Caco-2 (cell line): ENCODE measurements at regions of chr1 and their contacts with region 1.

Region 1: GRCh38 chr1:86499987-86500593 is 31.4 kb downstream of the CLCA1 start:
- DNase-seq: no peak
- H3K4me3 ChIP-seq: no peak overlapping the region
- H3K4me3 Mint-ChIP-seq: no peak overlapping the region
- H3K27ac Mint-ChIP-seq: no peak overlapping the region
- H3K4me1 ChIP-seq: peaks cover 10% of the 10 kb centered on the region; the same call in 1 of the 2 replicates
- H3K4me1 Mint-ChIP-seq: no peaks in the 10 kb centered on the region
- H3K27me3 ChIP-seq: no peaks in the 10 kb centered on the region
- H3K27me3 Mint-ChIP-seq: no peaks in the 10 kb centered on the region
- CTCF ChIP-seq: peak; percentile 74

Region 2: DNA sequence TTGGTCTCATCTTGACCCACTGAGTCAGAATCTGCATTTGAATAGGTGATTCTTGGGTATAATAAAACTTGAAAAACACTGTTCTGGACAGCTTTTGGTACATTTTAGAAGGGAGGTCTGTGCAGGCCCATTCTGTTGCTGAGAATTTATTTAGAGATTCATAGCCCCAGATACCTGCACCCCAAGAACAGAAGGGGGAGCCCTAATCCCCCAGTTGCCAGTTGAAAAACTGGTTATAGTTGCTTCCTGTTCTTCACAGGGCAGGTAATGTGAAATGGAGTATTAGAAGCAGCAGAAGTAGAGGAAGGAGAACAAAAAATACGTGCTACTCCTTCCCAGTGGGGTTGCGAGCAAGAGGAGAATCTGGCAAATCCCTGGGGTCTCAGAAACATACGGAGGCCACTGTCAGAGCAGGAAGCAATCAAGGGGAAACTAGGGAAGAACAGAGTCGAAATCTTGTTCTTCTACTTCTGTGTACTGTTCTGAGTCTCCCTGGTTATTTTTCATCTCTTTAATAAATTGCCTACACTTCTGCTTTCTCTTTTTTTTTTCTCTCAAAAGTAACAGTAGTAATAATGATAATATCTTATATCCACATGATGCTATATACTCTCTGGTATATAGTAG is 80.7 kb before region 1 on chr1:
- CTCF ChIA-PET with region 1: no interaction called
- POLR2A ChIA-PET with region 1: no interaction called
- intact Hi-C with region 1: loop called (anchors 2 kb)
- DNase-seq: peak in 1 of 2 experiments; percentile 19
- H3K4me3 ChIP-seq: no peak overlapping the region
- H3K4me3 Mint-ChIP-seq: no peak overlapping the region
- H3K27ac Mint-ChIP-seq: no peak overlapping the region
- H3K4me1 ChIP-seq: no peaks in the 10 kb centered on the region
- H3K4me1 Mint-ChIP-seq: no peaks in the 10 kb centered on the region
- H3K27me3 ChIP-seq: no peaks in the 10 kb centered on the region
- H3K27me3 Mint-ChIP-seq: no peaks in the 10 kb centered on the region
- CTCF ChIP-seq: peak; percentile 11 to 48

Region 3: GRCh38 chr1:86582161-86582560 is 82.1 kb after region 1 on chr1:
- CTCF ChIA-PET with region 1: no interaction called
- POLR2A ChIA-PET with region 1: no interaction called
- intact Hi-C with region 1: loop called (anchors 5 kb)
- DNase-seq: no peak
- H3K4me3 ChIP-seq: no peak overlapping the region
- H3K4me3 Mint-ChIP-seq: no peak overlapping the region
- H3K27ac Mint-ChIP-seq: peak overlapping the region; percentile 58
- H3K4me1 ChIP-seq: peaks cover 25% of the 10 kb centered on the region
- H3K4me1 Mint-ChIP-seq: peaks cover 16% of the 10 kb centered on the region
- H3K27me3 ChIP-seq: no peaks in the 10 kb centered on the region
- H3K27me3 Mint-ChIP-seq: no peaks in the 10 kb centered on the region
- CTCF ChIP-seq: no peak

Region 4: DNA sequence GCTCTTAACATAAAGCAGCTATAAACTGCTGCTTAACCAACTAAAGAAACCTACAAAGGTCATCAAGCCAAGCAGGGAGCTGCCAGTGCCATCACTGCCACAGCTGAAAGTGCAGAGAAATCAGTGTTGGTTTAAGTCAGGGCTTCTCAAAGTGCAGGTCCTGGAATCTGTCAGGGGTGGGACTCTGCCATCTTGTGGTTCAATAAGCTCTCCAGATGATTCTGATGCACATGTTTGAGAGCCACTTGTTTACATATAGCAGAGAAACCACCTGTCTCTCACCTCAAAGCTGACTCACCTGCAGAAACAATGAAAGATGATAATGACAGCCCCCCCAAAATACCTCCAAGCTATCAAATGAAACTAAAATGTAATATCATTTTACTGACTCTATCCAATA is 253.6 kb after region 1 on chr1:
- CTCF ChIA-PET with region 1: no interaction called
- POLR2A ChIA-PET with region 1: no interaction called
- intact Hi-C with region 1: loop called (anchors 5 kb)
- DNase-seq: peak in 1 of 2 experiments; percentile 29
- H3K4me3 ChIP-seq: no peak overlapping the region
- H3K4me3 Mint-ChIP-seq: no peak overlapping the region
- H3K27ac Mint-ChIP-seq: no peak overlapping the region
- H3K4me1 ChIP-seq: peaks cover 17% of the 10 kb centered on the region
- H3K4me1 Mint-ChIP-seq: peaks cover 7% of the 10 kb centered on the region
- H3K27me3 ChIP-seq: no peaks in the 10 kb centered on the region
- H3K27me3 Mint-ChIP-seq: no peaks in the 10 kb centered on the region
- CTCF ChIP-seq: peak in 1 of 2 experiments; percentile 18